GM10248 (cell line): ENCODE measurements at regions of chr22 and their contacts with region 1.

Region 1: GRCh38 chr22:22099833-22100812 is 117.5 kb upstream of the TOP3B start:
- DNase-seq: no peak
- CTCF ChIP-seq: peak; percentile 7

Region 2: GRCh38 chr22:22085702-22086500 is 14.2 kb before region 1 on chr22:
- CTCF ChIA-PET with region 1: interaction called, 13 read pairs
- POLR2A ChIA-PET with region 1: no interaction called
- DNase-seq: no peak
- CTCF ChIP-seq: no peak

Region 3: GRCh38 chr22:22110548-22111266 is 10.6 kb after region 1 on chr22:
- CTCF ChIA-PET with region 1: interaction called, 39 read pairs
- POLR2A ChIA-PET with region 1: no interaction called
- DNase-seq: peak; percentile 87
- CTCF ChIP-seq: peak; percentile 56